Psoas muscle (tissue), 8 donors: ENCODE measurements at regions of chr9 and their contacts with region 1.

Region 1: DNA sequence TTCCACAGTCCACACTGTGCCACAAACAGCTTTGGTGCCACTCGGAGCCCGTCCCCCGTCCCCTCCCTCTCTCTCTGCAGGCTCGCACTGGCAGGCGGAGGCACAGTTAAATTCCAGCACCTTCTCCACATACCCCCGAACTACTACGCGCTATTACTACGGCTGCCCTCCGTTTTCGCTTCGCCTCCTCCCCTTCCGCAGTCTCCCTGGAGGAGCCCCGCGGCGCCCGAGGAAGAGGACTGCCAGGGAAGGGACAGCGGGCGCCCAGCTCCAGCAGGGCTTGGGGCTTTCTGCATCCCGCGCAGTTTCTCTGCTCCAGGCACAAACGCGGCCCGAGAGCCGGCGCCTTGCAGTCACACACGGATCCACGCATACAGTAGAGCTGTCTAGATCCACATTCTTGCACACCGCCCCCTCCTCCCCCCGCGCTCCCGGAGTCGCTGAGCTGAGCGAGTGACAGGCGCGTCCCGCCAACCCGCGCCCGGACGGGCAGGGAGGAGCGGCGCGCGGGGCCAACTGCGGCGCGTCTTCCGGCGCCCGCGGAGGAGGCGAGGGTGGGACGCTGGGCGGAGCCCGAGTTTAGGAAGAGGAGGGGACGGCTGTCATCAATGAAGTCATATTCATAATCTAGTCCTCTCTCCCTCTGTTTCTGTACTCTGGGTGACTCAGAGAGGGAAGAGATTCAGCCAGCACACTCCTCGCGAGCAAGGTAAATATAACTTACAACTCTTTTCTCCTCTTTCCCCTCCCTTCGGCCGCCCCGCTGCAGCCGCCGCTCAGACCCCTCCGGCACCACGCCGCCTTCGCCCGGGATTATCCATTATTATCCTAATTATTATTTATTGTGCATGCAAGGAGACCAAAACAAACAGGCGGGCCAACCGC is at the start of gene SMARCA2:
- DNase-seq: peak; percentile 98 to 99
- ATAC-seq: peak; percentile 83 to 92 (median 86)
- H3K4me3 ChIP-seq: peak within 1 kb of the TSS; percentile 95
- H3K27ac ChIP-seq: peak within 1 kb of the TSS; percentile 99
- H3K4me1 ChIP-seq: peaks cover 27% of the 10 kb centered on the region
- H3K27me3 ChIP-seq: no peaks in the 10 kb centered on the region
- CTCF ChIP-seq: no peak
- total RNA-seq, gene SMARCA2: 62.2 to 97.2 (median 80.6) TPM

Region 2: DNA sequence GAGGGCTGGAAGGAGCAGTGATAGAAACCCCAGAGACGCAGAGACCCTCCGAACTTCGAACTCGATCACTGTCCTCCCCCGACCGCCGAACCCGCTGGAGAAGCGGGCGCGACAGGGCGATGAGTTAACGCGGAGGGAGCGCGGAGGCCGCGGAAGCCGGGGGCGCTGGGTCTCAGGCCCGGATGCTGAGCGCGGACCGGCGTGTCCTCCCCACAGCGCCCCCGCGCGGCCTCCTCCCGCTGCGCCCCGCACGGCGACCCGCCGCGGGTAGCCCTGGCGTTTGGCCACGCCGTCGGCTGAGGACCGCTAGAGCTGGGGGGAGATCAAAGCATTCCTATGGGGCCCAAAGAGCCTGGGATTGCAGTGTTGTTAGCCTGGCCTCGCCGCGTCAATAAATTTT is 972.5 kb before region 1 on chr9:
- intact Hi-C with region 1: loop called in 1 of 2 experiments (anchors 10 kb)
- DNase-seq: peak; percentile 26 to 71
- ATAC-seq: peak in 3 of 4 donors; percentile 38 to 68 (median 45)
- H3K4me3 ChIP-seq: peak overlapping the region; percentile 56
- H3K27ac ChIP-seq: no peak overlapping the region
- H3K4me1 ChIP-seq: peaks cover 4% of the 10 kb centered on the region
- H3K27me3 ChIP-seq: peaks cover 4 to 83% (median 13%) of the 10 kb centered on the region in 3 donors
- CTCF ChIP-seq: peak; percentile 31

Region 3: DNA sequence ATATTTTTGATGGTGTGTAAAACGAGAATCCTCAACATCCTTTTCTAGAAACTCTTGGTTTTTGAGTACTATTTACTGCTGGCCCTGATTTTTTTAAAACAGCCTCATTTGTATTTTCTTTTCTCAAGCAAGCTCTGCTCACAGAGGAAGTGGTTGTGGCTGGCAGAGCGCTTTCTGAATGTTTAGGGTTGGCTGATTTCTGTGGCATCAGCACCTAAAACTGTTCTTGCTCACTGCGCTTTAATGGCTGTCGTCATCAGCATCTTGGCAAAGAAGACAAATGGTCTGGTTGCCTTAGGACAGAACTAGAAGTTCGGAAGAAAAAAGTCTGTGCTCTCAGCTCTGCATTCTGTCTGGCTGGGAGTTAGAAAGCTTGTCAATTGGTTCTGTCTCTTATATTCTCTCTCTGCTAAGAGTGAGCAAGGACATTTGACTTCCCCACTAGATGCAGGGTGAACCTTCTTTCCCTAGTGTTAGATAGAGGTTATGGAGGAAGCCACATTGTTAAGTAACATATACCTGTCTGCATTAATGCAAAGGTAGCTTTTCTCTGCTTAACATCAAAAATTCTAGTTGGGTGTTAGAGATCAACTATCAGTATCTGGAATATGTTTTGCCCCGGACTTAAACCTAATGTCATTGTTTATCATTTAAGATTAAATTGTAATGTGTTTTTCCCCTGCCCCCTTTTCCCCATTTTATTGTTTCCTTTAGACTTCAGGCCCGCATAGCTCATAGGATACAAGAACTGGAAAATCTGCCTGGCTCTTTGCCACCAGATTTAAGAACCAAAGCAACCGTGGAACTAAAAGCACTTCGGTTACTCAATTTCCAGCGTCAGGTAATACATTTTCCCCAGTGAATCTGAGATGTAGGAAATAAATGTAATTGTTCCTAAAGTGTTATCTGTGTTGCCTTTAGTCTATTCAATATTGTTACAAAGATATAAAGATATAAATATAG is 39.2 kb after region 1 on chr9:
- intact Hi-C with region 1: no loop called
- DNase-seq: no peak
- ATAC-seq: no peak
- H3K4me3 ChIP-seq: no peak overlapping the region
- H3K27ac ChIP-seq: no peak overlapping the region
- H3K4me1 ChIP-seq: no peaks in the 10 kb centered on the region
- H3K27me3 ChIP-seq: no peaks in the 10 kb centered on the region
- CTCF ChIP-seq: no peak

Region 4: DNA sequence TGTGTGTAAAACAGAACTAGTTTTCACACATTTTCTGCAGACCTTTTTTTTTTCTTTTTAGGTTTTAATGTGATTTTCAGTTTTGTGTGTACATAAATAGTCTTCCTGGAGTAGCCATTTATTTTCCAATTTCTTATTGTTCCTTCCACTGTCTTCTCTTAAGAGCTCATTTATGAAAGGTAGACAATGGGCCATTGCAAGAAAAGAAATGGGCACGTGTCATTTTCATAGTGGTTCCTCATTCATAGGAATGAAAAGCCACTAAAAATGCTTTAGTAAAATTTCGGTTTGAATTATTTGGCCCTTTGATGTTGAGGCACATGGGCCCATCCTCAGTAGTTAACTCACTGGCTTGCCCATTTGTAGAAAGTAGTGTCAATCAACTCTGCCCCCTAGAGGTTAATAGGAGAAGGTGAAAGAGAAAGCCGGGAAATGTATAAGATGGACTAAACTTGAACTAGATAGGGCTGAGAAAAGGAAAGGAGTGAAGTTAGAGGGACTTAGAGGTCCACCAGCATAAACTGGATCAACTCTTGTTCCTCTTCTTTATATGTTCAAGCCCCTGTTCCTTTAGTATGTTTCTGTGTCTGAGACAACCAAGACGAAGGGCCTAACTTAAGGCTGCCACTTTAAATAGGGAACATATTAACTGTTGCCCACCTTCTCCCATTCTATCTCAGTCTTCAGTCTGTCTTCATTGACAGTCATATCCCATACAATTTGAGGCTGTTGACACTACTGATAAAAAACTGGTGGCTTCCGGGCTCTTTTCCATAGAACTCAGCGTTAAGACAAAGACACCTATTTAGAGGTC is 72.8 kb after region 1 on chr9:
- intact Hi-C with region 1: loop called in 1 of 2 experiments (anchors 10 kb)
- DNase-seq: no peak
- ATAC-seq: peak; percentile 49 to 82 (median 68)
- H3K4me3 ChIP-seq: no peak overlapping the region
- H3K27ac ChIP-seq: no peak overlapping the region
- H3K4me1 ChIP-seq: no peaks in the 10 kb centered on the region
- H3K27me3 ChIP-seq: no peaks in the 10 kb centered on the region
- CTCF ChIP-seq: peak; percentile 51

Region 5: GRCh38 chr9:2158111-2158610 is 143.2 kb after region 1 on chr9:
- intact Hi-C with region 1: loop called in 1 of 2 experiments (anchors 5 kb)
- DNase-seq: peak; percentile 40 to 59
- ATAC-seq: peak; percentile 57 to 69 (median 64)
- H3K4me3 ChIP-seq: peak overlapping the region; percentile 72
- H3K27ac ChIP-seq: peak overlapping the region; percentile 83
- H3K4me1 ChIP-seq: peaks cover 24% of the 10 kb centered on the region
- H3K27me3 ChIP-seq: no peaks in the 10 kb centered on the region
- CTCF ChIP-seq: no peak

Region 6: DNA sequence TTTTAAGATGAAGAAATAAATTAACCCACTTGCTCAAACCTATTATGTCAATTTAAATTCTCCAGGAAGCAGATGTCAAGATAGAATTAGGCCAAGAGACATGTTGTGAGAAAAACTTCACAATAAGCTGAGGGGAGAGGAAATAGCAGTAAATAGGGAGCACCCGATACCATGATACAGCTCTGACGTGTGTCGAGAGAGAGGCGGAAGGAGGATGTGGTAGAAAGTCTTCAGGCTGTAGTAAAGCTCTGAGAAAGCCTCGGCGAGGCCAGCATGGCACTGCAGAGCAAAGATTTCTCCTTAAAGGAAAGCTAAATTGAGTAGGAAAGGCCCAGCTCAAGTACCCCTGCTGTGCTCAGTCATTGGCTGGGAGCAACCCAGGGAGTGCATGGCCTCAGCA is 835.0 kb after region 1 on chr9:
- intact Hi-C with region 1: loop called in 1 of 2 experiments (anchors 10 kb)
- DNase-seq: no peak
- ATAC-seq: no peak
- H3K4me3 ChIP-seq: no peak overlapping the region
- H3K27ac ChIP-seq: no peak overlapping the region
- H3K4me1 ChIP-seq: peaks cover 12% of the 10 kb centered on the region
- H3K27me3 ChIP-seq: no peaks in the 10 kb centered on the region
- CTCF ChIP-seq: no peak